Activated CD8-positive, alpha-beta T cell treated with anti-CD3 and anti-CD28 coated beads, Interleukin-2, amount 10 ng/mL, durations not matched to agents 7 days and 5 days (primary cell): ENCODE measurements at regions of chr7 and their contacts with region 1.

Region 1: DNA sequence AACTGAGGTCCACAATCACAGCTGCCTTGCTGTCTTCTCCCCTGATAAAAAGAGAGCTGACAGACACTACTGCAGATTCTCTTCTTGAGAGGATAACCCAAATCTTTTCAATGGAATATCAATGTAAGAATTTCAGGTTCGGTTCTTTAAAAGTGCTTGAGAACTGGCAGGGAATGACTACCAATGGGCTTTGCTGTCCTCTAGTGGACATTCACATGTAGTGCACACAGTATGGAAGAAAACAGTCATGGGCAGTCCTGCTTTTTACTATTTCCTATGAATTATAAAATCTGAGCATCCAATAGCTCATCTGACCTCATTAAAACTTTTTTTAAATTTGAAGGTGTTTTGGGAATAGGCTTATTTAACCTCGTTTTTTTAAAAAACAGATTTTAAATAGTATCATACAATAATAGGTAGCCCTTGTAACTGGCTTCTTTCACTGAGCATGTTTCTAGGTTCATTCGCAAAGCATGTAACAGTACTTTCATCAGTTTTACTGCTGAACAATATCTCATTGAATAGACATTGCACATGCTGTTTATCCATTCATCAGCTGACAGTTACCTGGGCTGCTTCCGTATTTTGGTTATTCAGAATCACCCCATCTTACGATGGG is 18.3 kb downstream of the FZD9 start:
- DNase-seq: peak; percentile 45
- ATAC-seq: peak; percentile 74
- H3K4me3 Mint-ChIP-seq: no peak overlapping the region
- H3K27ac Mint-ChIP-seq: no peak overlapping the region
- H3K4me1 Mint-ChIP-seq: peaks cover 26% of the 10 kb centered on the region
- H3K27me3 Mint-ChIP-seq: no peaks in the 10 kb centered on the region

Region 2: DNA sequence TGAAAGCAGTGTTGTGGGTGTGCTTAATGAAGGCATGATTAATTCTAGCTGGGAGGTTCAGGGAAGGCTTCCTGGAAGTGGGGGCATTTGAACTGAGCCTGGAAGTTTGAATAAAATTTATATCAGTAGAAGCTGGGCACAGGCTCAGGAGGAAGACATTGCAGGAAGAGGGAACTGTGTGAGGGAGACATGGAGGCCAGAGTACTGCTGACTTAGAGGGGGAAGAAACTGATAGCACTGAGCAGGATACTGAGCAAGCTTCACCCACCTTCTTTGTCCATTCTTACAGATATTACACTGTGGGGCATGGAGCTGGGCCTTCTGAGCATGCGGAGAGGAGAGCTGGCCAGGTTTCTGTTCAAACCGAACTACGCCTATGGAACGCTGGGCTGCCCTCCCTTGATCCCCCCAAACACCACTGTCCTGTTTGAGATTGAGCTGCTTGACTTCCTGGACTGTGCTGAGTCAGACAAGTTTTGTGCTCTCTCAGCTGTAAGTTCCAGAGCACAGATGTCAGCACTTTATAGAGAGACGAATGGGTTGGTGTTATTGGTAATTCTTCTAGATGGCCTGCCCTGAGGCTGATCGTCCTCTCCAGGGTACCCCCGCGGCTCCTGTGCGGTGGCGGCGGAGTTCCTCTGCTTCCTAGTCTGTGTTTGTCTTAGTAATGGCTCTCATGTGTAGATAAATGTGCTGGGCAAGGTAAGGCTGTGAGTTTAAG is 121.9 kb before region 1 on chr7:
- CTCF ChIA-PET with region 1: interaction called, 18 read pairs
- POLR2A ChIA-PET with region 1: no interaction called
- DNase-seq: no peak
- ATAC-seq: no peak
- H3K4me3 Mint-ChIP-seq: no peak overlapping the region
- H3K27ac Mint-ChIP-seq: no peak overlapping the region
- H3K4me1 Mint-ChIP-seq: peaks cover 4% of the 10 kb centered on the region
- H3K27me3 Mint-ChIP-seq: peaks cover 3% of the 10 kb centered on the region

Region 3: GRCh38 chr7:73468097-73468496 is 16.2 kb after region 1 on chr7:
- CTCF ChIA-PET with region 1: interaction called, 10 read pairs
- POLR2A ChIA-PET with region 1: no interaction called
- DNase-seq: no peak
- ATAC-seq: no peak
- H3K4me3 Mint-ChIP-seq: no peak overlapping the region
- H3K27ac Mint-ChIP-seq: no peak overlapping the region
- H3K4me1 Mint-ChIP-seq: no peaks in the 10 kb centered on the region
- H3K27me3 Mint-ChIP-seq: no peaks in the 10 kb centered on the region

Region 4: GRCh38 chr7:73477376-73477775 is 25.5 kb after region 1 on chr7:
- CTCF ChIA-PET with region 1: interaction called, 15 read pairs
- POLR2A ChIA-PET with region 1: no interaction called
- DNase-seq: no peak
- ATAC-seq: no peak
- H3K4me3 Mint-ChIP-seq: no peak overlapping the region
- H3K27ac Mint-ChIP-seq: no peak overlapping the region
- H3K4me1 Mint-ChIP-seq: peaks cover 9% of the 10 kb centered on the region
- H3K27me3 Mint-ChIP-seq: no peaks in the 10 kb centered on the region

Region 5: GRCh38 chr7:73522105-73522872 is 70.4 kb after region 1 on chr7 and contains the start of gene BAZ1B:
- CTCF ChIA-PET with region 1: interaction called, 14 read pairs
- POLR2A ChIA-PET with region 1: no interaction called
- DNase-seq: peak; percentile 99
- ATAC-seq: peak; percentile 94
- H3K4me3 Mint-ChIP-seq: peak within 1 kb of the TSS; percentile 98
- H3K27ac Mint-ChIP-seq: peak within 1 kb of the TSS; percentile 100
- H3K4me1 Mint-ChIP-seq: peaks cover 62% of the 10 kb centered on the region
- H3K27me3 Mint-ChIP-seq: no peaks in the 10 kb centered on the region
- total RNA-seq, gene BAZ1B: 111 to 112 TPM